ENCODE measurements at regions of chr10 and their contacts with region 1.

Region 1: GRCh38 chr10:84537447-84537931 is 209.1 kb downstream of the CCSER2 start:
- DNase-seq: peak; percentile 32
- H3K4me3 Mint-ChIP-seq: no peak overlapping the region
- H3K27ac Mint-ChIP-seq: no peak overlapping the region
- H3K4me1 Mint-ChIP-seq: peaks cover 16% of the 10 kb centered on the region
- H3K27me3 Mint-ChIP-seq: peaks cover 39% of the 10 kb centered on the region

Region 2: DNA sequence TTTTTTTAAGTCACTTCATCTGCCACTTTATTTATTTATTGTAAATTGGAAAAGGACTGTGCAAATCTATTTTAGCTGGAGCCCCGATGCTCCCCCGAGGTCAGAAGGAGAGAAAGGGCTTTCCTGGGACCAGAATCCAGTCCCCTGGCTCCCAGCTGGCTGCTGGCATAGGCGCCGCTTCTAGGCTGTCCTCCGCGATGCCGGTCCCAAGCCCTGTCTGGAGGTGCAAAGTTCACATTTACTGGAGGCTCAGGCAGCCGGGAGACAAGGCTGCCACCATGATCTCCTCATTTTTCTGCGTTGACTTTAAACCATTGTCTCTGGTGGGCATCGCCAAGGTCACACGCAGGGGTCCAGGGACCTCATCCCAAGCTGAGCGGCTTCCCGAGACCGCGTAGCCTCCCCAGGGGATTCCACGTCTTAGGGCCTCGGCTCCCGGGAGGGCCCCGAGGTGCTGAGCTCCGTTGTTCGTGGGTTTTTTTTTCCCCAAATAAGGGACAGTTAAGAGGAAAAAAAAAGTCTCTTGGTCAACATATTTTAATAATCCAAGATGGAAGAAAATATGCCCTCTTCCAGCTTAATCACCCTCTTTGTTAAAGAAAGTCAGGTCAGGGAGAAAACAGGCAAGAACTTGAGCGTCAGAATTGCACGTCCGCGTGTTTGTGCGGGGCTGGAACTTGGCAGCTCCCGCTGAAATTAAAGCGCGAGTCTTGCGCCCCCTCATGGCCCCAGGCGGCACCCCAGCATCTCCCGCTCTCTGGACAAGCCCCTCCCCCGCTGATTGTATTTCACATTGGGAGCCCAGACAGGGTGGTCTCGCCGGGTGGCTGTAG is 280.8 kb before region 1 on chr10:
- CTCF ChIA-PET with region 1: interaction called, 333 read pairs
- DNase-seq: peak; percentile 65
- H3K4me3 Mint-ChIP-seq: no peak overlapping the region
- H3K27ac Mint-ChIP-seq: no peak overlapping the region
- H3K4me1 Mint-ChIP-seq: peaks cover 5% of the 10 kb centered on the region
- H3K27me3 Mint-ChIP-seq: peaks cover 36% of the 10 kb centered on the region

Region 3: DNA sequence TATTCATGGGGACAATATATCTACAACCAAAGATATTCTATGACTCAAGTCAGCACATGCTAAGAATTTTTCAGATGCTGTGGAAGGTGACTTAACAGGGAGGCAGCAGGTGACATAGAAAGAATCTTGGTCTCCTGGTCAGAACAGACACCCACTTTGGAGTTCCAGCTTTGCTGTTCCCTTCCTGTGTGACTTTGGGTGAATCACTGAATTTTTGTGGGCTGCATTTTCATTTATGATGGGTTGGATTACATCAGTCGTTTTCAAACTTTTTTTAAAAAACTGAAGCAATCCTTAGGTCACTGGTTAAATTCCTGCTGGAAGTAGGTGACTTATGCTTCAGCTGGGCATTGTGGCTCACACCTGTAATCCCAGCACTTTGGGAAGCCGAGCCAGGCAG is 267.7 kb before region 1 on chr10:
- CTCF ChIA-PET with region 1: interaction called, 333 read pairs
- DNase-seq: no peak
- H3K4me3 Mint-ChIP-seq: no peak overlapping the region
- H3K27ac Mint-ChIP-seq: no peak overlapping the region
- H3K4me1 Mint-ChIP-seq: peaks cover 21% of the 10 kb centered on the region
- H3K27me3 Mint-ChIP-seq: peaks cover 8% of the 10 kb centered on the region

Region 4: GRCh38 chr10:84352251-84352842 is 185.1 kb before region 1 on chr10:
- CTCF ChIA-PET with region 1: interaction called, 21 read pairs
- DNase-seq: peak; percentile 77
- H3K4me3 Mint-ChIP-seq: no peak overlapping the region
- H3K27ac Mint-ChIP-seq: no peak overlapping the region
- H3K4me1 Mint-ChIP-seq: peaks cover 49% of the 10 kb centered on the region
- H3K27me3 Mint-ChIP-seq: no peaks in the 10 kb centered on the region

Region 5: DNA sequence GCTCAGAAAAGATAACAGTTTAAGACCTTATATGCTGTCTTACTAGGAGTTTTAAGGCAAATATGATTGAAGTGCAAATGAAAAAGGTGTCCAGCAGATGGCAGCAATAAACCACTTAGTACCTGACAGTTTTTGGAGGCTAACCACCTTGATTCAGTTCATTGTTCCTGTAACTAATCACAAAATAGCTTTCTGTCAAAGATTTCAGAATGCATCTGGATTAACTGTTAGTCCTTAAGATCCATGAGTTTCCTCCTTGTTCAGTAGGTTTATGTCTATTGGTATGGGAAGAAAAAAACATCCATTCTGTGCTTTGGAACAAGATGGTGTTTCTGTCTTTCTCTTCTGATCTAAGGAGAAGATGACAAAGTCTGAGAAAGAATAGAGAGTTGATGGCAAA is 162.5 kb before region 1 on chr10:
- CTCF ChIA-PET with region 1: interaction called, 52 read pairs
- DNase-seq: peak; percentile 44
- H3K4me3 Mint-ChIP-seq: no peak overlapping the region
- H3K27ac Mint-ChIP-seq: peak overlapping the region; percentile 16
- H3K4me1 Mint-ChIP-seq: peaks cover 15% of the 10 kb centered on the region
- H3K27me3 Mint-ChIP-seq: no peaks in the 10 kb centered on the region

Region 6: DNA sequence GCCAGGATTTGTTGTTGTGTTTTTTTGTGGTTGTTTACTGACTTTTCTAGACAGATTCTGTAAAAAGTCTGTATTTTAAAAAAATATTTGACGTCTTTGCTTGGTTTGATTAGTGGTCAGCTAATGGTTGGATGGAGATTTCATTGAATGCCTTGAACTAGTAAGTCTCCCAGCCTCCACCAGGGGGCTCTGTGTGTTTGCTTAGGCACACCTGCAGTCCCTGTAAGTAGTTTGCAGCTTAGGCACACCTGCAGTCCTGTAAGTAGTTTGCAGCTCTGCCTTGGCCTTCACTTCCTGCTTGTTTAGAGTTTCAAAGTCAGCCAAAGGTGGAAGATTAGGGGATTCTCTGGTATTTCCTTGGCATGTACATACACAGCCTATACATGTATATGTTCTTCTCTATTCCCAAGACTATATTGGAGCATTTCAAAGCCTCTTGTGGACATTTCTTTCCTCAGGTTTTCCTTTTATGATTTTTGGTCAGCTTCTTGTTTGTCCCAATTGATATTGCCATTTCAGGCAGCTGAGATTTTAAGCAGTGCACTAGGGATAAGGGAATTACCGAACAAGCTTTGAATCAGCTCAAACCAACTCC is 107.5 kb before region 1 on chr10:
- CTCF ChIA-PET with region 1: interaction called, 22 read pairs
- DNase-seq: peak; percentile 79
- H3K4me3 Mint-ChIP-seq: no peak overlapping the region
- H3K27ac Mint-ChIP-seq: no peak overlapping the region
- H3K4me1 Mint-ChIP-seq: peaks cover 14% of the 10 kb centered on the region
- H3K27me3 Mint-ChIP-seq: no peaks in the 10 kb centered on the region

Region 7: GRCh38 chr10:84493951-84494848 is 43.3 kb before region 1 on chr10:
- CTCF ChIA-PET with region 1: no interaction called
- DNase-seq: no peak
- H3K4me3 Mint-ChIP-seq: no peak overlapping the region
- H3K27ac Mint-ChIP-seq: no peak overlapping the region
- H3K4me1 Mint-ChIP-seq: peaks cover 4% of the 10 kb centered on the region
- H3K27me3 Mint-ChIP-seq: no peaks in the 10 kb centered on the region

Region 8: GRCh38 chr10:84525120-84525806 is 12.2 kb before region 1 on chr10:
- CTCF ChIA-PET with region 1: interaction called, 13 read pairs
- DNase-seq: no peak
- H3K4me3 Mint-ChIP-seq: no peak overlapping the region
- H3K27ac Mint-ChIP-seq: no peak overlapping the region
- H3K4me1 Mint-ChIP-seq: peaks cover 5% of the 10 kb centered on the region
- H3K27me3 Mint-ChIP-seq: peaks cover 4% of the 10 kb centered on the region